Activated CD8-positive, alpha-beta T cell treated with anti-CD3 and anti-CD28 coated beads for 36 hours (primary cell): ENCODE measurements at regions of chr5 and their contacts with region 1.

Region 1: GRCh38 chr5:132500931-132501630 is 10.5 kb upstream of the IRF1 start:
- DNase-seq: peak; percentile 83
- ATAC-seq: peak; percentile 40
- H3K4me3 Mint-ChIP-seq: no peak overlapping the region
- H3K27ac Mint-ChIP-seq: peak overlapping the region; percentile 71
- H3K4me1 Mint-ChIP-seq: peaks cover 36% of the 10 kb centered on the region
- H3K27me3 Mint-ChIP-seq: peaks cover under 1% of the 10 kb centered on the region
- CTCF ChIP-seq: peak; percentile 89

Region 2: DNA sequence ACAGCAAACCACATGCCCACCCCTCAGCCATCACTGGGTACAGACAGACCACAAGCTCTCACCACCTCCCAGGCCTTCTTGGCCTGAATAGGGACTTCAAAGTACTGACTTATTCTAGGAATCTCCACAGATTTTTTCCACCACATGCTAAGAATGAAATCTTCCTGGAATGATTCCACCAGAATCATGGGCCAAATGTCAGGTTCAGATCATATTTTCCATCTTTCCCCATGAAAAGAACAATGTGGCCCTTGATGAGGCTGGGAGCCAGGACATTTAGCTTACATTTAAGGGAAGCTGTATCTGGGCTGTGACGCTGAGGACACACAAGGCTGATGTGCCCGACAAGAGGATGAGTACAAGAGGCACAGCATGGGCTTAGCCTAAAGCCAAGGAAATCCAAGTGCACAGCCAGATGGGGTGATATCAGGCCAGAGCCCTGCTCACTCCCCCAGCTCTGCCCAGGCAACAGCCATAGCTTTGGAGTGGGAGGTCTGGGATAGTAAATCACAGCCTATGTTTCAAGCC is 517.8 kb before region 1 on chr5:
- CTCF ChIA-PET with region 1: no interaction called
- POLR2A ChIA-PET with region 1: no interaction called
- intact Hi-C with region 1: no loop called
- DNase-seq: no peak
- ATAC-seq: no peak
- H3K4me3 Mint-ChIP-seq: no peak overlapping the region
- H3K27ac Mint-ChIP-seq: no peak overlapping the region
- H3K4me1 Mint-ChIP-seq: peaks cover 8% of the 10 kb centered on the region
- H3K27me3 Mint-ChIP-seq: no peaks in the 10 kb centered on the region
- CTCF ChIP-seq: no peak

Region 3: GRCh38 chr5:132272311-132273210 is 228.5 kb before region 1 on chr5:
- CTCF ChIA-PET with region 1: interaction called, 5 read pairs
- POLR2A ChIA-PET with region 1: no interaction called
- intact Hi-C with region 1: loop called (anchors 10 kb)
- DNase-seq: peak; percentile 82
- ATAC-seq: peak; percentile 53
- H3K4me3 Mint-ChIP-seq: no peak overlapping the region
- H3K27ac Mint-ChIP-seq: no peak overlapping the region
- H3K4me1 Mint-ChIP-seq: peaks cover 17% of the 10 kb centered on the region
- H3K27me3 Mint-ChIP-seq: peaks cover 9% of the 10 kb centered on the region
- CTCF ChIP-seq: peak; percentile 92

Region 4: DNA sequence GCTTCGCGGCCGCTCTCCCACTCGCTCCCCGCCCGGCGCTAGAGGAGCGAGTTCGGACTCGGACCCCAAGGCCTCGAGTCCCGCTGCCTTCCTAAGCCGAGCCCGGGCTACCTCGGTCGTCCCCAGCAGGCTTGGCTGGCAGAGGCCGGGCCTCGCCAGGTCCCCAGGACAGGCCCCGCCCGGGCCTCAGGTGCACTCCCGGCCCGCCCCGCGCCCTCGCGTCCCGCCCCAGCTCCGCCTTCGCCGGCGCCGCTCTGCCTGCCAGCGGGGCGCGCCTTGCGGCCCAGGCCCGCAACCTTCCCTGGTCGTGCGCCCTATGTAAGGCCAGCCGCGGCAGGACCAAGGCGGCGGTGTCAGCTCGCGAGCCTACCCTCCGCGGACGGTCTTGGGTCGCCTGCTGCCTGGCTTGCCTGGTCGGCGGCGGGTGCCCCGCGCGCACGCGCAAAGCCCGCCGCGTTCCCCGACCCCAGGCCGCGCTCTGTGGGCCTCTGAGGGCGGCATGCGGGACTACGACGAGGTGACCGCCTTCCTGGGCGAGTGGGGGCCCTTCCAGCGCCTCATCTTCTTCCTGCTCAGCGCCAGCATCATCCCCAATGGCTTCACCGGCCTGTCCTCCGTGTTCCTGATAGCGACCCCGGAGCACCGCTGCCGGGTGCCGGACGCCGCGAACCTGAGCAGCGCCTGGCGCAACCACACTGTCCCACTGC is 131.5 kb before region 1 on chr5 and contains the start of gene SLC22A5:
- CTCF ChIA-PET with region 1: interaction called, 11 read pairs
- POLR2A ChIA-PET with region 1: interaction called, 3 read pairs
- intact Hi-C with region 1: no loop called
- DNase-seq: peak; percentile 73
- ATAC-seq: peak; percentile 96
- H3K4me3 Mint-ChIP-seq: peak within 1 kb of the TSS; percentile 82
- H3K27ac Mint-ChIP-seq: peak within 1 kb of the TSS; percentile 84
- H3K4me1 Mint-ChIP-seq: peaks cover 28% of the 10 kb centered on the region
- H3K27me3 Mint-ChIP-seq: no peaks in the 10 kb centered on the region
- CTCF ChIP-seq: no peak
- total RNA-seq, gene SLC22A5: 4.0 to 4.1 TPM

Region 5: GRCh38 chr5:132410451-132411381 is 90.4 kb before region 1 on chr5:
- CTCF ChIA-PET with region 1: interaction called, 25 read pairs
- POLR2A ChIA-PET with region 1: interaction called, 93 read pairs
- intact Hi-C with region 1: no loop called
- DNase-seq: peak; percentile 89
- ATAC-seq: peak; percentile 71
- H3K4me3 Mint-ChIP-seq: peak overlapping the region; percentile 93
- H3K27ac Mint-ChIP-seq: peak overlapping the region; percentile 100
- H3K4me1 Mint-ChIP-seq: peaks cover 63% of the 10 kb centered on the region
- H3K27me3 Mint-ChIP-seq: no peaks in the 10 kb centered on the region
- CTCF ChIP-seq: peak; percentile 53

Region 6: GRCh38 chr5:132419502-132420468 is 81.3 kb before region 1 on chr5:
- CTCF ChIA-PET with region 1: interaction called, 67 read pairs
- POLR2A ChIA-PET with region 1: interaction called, 1,131 read pairs
- intact Hi-C with region 1: no loop called
- DNase-seq: peak; percentile 73
- ATAC-seq: peak; percentile 77
- H3K4me3 Mint-ChIP-seq: peak overlapping the region; percentile 49
- H3K27ac Mint-ChIP-seq: peak overlapping the region; percentile 84
- H3K4me1 Mint-ChIP-seq: peaks cover 88% of the 10 kb centered on the region
- H3K27me3 Mint-ChIP-seq: no peaks in the 10 kb centered on the region
- CTCF ChIP-seq: peak; percentile 93

Region 7: GRCh38 chr5:132466433-132467286 is 34.4 kb before region 1 on chr5:
- CTCF ChIA-PET with region 1: interaction called, 17 read pairs
- POLR2A ChIA-PET with region 1: interaction called, 1,641 read pairs
- intact Hi-C with region 1: no loop called
- DNase-seq: peak; percentile 89
- ATAC-seq: peak; percentile 69
- H3K4me3 Mint-ChIP-seq: peak overlapping the region; percentile 66
- H3K27ac Mint-ChIP-seq: peak overlapping the region; percentile 88
- H3K4me1 Mint-ChIP-seq: peaks cover 87% of the 10 kb centered on the region
- H3K27me3 Mint-ChIP-seq: no peaks in the 10 kb centered on the region
- CTCF ChIP-seq: no peak

Region 8: DNA sequence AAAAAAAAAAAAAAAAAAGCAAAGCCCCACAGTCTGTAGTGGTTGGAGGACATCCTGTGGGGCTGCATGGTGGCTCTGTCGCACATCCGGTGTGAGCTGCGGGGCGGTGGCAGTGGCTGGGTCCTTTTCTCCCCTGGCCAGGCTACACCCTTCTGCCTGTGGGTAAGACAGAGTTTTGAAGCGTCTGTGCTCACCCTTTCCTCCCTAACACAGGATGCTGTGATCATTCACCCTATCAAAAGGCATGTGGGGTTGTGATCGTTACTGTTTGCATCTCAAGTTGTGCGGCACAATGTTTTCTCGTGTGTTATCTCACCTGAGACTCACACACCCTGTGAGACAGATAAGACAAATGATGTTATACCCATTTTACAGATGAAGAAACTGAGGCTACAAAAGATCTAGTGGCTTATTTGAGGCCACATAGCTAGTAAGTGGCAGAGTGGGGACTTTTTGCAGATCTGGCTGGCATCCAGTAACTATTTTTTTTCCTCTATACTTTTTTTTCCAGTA is 28.0 kb before region 1 on chr5:
- CTCF ChIA-PET with region 1: interaction called, 35 read pairs
- POLR2A ChIA-PET with region 1: interaction called, 1,641 read pairs
- intact Hi-C with region 1: no loop called
- DNase-seq: peak; percentile 91
- ATAC-seq: peak; percentile 94
- H3K4me3 Mint-ChIP-seq: no peak overlapping the region
- H3K27ac Mint-ChIP-seq: peak overlapping the region; percentile 78
- H3K4me1 Mint-ChIP-seq: peaks cover 72% of the 10 kb centered on the region
- H3K27me3 Mint-ChIP-seq: no peaks in the 10 kb centered on the region
- CTCF ChIP-seq: no peak